Gastrocnemius medialis (tissue), 4 donors: ENCODE measurements at regions of chr14 and their contacts with region 1.

Region 1: DNA sequence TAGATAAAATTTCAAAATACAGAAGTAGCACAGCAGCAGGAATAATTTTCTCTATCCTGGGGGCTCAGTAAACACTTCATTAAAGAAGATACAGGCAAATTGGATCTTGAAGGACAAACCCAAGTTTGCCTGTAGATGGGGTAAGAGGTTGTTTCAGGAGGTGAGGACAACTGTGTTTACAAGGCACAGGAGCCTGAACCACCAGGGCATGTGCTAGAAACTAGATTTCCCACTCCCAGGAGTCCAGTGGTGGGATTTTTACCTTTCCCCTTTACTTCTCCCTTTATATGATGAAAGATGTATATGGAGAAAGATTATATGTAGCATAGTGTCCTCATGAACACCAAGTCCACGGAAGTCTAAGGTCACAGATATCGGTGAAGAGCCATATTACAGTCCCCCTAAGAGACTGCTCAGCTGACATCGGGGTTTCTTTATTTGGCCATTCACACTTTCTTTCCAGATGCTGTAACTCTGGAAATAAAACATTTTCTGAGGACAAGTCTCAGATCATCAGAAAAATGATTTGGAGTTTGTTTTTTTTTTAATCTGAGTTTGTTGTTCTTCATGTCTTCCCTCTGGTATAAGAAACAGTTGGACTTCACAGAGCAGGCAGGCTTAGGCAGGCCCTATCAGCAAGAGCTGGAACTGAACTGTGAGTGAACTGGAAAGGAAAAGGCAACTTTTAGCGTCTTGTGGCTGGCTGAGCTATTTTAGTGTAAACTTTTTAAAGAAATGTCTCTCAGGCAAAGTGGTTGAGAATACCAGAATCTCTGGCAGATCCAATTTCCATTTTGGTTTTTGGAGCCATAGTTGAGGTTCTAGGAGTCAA is 8.0 kb upstream of the EVL start:
- DNase-seq: no peak
- ATAC-seq: no peak
- H3K4me3 ChIP-seq: no peak overlapping the region
- H3K27ac ChIP-seq: peak overlapping the region in 2 of 4 donors; percentile 14 to 16
- H3K4me1 ChIP-seq: peaks cover 0 to 3% of the 10 kb centered on the region in 2 donors
- H3K27me3 ChIP-seq: no peaks in the 10 kb centered on the region
- CTCF ChIP-seq: peak in 1 of 5 experiments; percentile 19
- POLR2A ChIP-seq: no peak

Region 2: GRCh38 chr14:100031536-100032281 is 25.5 kb before region 1 on chr14:
- in situ Hi-C with region 1: no loop called
- intact Hi-C with region 1: loop called (anchors 2 kb)
- DNase-seq: peak; percentile 40 to 51
- ATAC-seq: peak; percentile 80 to 87
- H3K4me3 ChIP-seq: peak overlapping the region in 1 of 4 donors; percentile 12
- H3K27ac ChIP-seq: peak overlapping the region in 1 of 4 donors; percentile 26
- H3K4me1 ChIP-seq: peaks cover 9 to 11% of the 10 kb centered on the region in 2 donors
- H3K27me3 ChIP-seq: no peaks in the 10 kb centered on the region
- CTCF ChIP-seq: no peak
- POLR2A ChIP-seq: no peak